ENCODE measurements at regions of chr1 and their contacts with region 1.

Region 1: GRCh38 chr1:21573971-21574465 is 64.8 kb downstream of the ALPL start:
- DNase-seq: peak; percentile 59
- H3K4me3 ChIP-seq: no peak overlapping the region
- H3K27ac ChIP-seq: no peak overlapping the region
- H3K4me1 ChIP-seq: peaks cover 3% of the 10 kb centered on the region
- H3K27me3 ChIP-seq: no peaks in the 10 kb centered on the region
- CTCF ChIP-seq: peak; percentile 42

Region 2: DNA sequence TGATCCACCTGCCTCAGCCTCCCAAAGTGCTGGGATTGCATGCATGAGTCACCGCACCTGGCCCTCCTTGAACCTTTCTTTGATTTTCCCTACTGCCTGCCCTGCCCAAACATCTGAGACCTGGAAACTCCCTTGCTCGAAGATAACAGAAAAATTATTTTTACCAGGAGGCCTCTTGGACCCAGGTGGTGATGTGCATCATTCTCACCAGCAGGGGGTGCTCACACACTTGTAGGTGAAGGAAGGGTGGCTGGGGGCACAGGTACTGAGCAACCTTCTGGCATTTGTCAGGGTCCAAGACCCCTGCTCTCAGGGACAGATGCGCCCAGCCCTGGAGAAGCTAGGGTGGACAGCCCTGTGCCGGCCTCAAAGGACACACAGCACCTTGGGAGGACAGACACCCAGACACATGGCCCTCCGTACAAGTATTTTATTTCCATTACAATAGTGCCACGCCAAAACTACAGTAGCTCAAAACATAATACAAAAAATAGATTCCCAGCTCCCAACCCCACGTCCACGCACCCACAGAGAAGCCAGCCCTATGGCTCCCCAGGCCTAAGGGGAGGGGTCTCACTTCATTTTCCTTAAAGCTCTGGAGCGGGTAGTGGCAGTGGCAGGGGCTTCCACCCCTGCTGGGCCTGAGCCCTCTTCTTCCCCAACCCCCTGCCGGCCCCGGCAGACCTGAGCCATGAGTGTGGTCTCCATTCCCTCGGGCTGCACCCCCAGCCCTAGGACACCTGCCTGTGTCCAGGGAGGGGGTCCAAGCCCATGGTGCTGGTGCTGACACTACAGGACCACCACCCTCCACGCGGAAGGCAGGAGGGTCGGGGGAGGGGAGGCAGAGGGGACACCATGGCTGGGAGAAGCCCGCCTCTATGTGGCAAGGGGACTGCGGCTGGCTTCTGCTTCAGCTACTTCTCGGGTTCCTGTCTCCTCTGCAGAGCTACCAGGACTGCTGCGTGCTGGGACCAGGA is 356.9 kb before region 1 on chr1:
- intact Hi-C with region 1: loop called (anchors 10 kb)
- DNase-seq: peak; percentile 74
- H3K4me3 ChIP-seq: no peak overlapping the region
- H3K27ac ChIP-seq: no peak overlapping the region
- H3K4me1 ChIP-seq: no peaks in the 10 kb centered on the region
- H3K27me3 ChIP-seq: no peaks in the 10 kb centered on the region
- CTCF ChIP-seq: peak; percentile 73